CD4-positive, alpha-beta T cell (primary cell): ENCODE measurements at regions of chr15 and their contacts with region 1.

Region 1: GRCh38 chr15:89982315-89983055 is 18.6 kb upstream of the ZNF710 start:
- DNase-seq: no peak
- ATAC-seq: no peak
- H3K4me3 ChIP-seq: no peak overlapping the region
- H3K4me3 Mint-ChIP-seq: no peak overlapping the region
- H3K27ac ChIP-seq: no peak overlapping the region
- H3K27ac Mint-ChIP-seq: no peak overlapping the region
- H3K4me1 ChIP-seq: no peaks in the 10 kb centered on the region
- H3K4me1 Mint-ChIP-seq: no peaks in the 10 kb centered on the region
- H3K27me3 ChIP-seq: peaks cover 0 to 9% of the 10 kb centered on the region in 2 experiments
- H3K27me3 Mint-ChIP-seq: no peaks in the 10 kb centered on the region
- CTCF ChIP-seq: no peak

Region 2: DNA sequence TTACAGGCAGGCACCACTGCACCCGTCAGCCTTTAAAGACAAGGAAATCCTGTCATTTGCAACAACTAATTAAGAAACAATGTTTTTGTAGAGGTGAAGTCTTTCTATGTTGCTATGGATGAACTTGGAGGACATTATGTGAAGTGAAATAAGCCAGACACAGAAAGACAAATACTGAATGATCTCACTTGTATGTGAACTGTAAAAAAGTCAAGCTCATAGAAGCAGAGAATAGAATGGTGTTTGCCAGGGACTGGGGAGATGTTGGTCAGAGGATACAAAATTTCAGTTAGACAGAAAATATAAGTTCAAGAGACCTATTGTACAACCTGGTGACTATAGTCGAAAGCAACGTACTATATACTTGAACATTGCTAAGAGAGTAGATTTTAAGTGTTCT is 42.6 kb before region 1 on chr15:
- CTCF ChIA-PET with region 1: no interaction called
- POLR2A ChIA-PET with region 1: no interaction called
- intact Hi-C with region 1: loop called in 1 of 2 experiments (anchors 5 kb)
- DNase-seq: no peak
- ATAC-seq: no peak
- H3K4me3 ChIP-seq: no peak overlapping the region
- H3K4me3 Mint-ChIP-seq: no peak overlapping the region
- H3K27ac ChIP-seq: no peak overlapping the region
- H3K27ac Mint-ChIP-seq: no peak overlapping the region
- H3K4me1 ChIP-seq: peaks cover 15% of the 10 kb centered on the region
- H3K4me1 Mint-ChIP-seq: peaks cover 20% of the 10 kb centered on the region
- H3K27me3 ChIP-seq: no peaks in the 10 kb centered on the region
- H3K27me3 Mint-ChIP-seq: no peaks in the 10 kb centered on the region
- CTCF ChIP-seq: no peak

Region 3: DNA sequence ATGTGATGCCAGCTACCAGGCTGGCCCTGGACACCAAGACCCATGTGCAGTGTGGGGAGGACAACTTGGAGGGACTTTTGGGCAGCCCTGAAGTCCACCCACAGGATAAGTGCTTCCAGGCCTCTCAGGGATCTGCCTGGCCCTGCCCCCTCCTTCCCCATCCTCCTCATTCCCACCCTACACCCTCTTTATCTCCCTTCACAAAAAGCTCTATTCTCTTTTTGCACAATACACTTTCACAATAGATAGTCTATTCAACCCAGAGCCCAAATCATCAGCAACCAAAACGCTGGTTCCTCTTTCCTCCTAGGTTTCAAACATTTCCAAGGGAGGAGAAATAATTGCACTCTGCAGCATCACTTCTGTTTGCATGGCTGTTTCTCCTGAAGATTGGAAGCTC is 10.9 kb after region 1 on chr15:
- CTCF ChIA-PET with region 1: no interaction called
- POLR2A ChIA-PET with region 1: no interaction called
- intact Hi-C with region 1: no loop called
- DNase-seq: no peak
- ATAC-seq: no peak
- H3K4me3 ChIP-seq: no peak overlapping the region
- H3K4me3 Mint-ChIP-seq: no peak overlapping the region
- H3K27ac ChIP-seq: no peak overlapping the region
- H3K27ac Mint-ChIP-seq: no peak overlapping the region
- H3K4me1 ChIP-seq: peaks cover 2% of the 10 kb centered on the region
- H3K4me1 Mint-ChIP-seq: no peaks in the 10 kb centered on the region
- H3K27me3 ChIP-seq: no peaks in the 10 kb centered on the region
- H3K27me3 Mint-ChIP-seq: no peaks in the 10 kb centered on the region
- CTCF ChIP-seq: no peak